ENCODE measurements at regions of chr10 and their contacts with region 1.

Region 1: DNA sequence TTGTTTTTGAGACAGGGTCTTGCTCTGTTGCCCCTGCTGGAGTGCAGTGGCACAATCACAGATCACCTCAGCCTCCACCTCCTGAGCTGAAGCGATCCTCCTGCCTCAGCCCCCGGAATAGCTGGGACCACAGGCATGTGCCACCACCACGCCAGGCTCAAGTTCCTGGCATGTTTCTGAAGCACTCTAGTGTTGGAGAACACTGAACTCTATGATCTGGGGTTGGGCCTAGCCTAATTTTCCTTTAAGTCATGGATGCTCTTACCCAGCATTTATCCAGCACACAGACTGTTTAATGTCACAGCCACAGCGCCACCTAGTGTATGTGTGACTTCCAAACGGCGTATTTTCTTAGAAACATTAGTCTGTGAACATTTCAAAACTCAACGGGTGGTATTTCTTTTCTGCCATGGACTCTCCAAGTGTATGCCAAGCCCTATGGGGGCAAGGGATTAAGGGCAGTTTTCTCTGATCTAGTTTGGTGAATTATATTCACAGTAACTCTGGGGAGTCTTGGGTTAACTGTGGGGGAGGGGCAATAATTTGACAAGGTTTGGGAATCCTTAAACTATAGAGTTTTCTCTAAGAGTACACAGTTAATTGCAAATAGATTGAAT is 91.8 kb downstream of the CREM start:
- DNase-seq: peak; percentile 69 to 90
- ATAC-seq: peak; percentile 58 to 83 (median 70)
- H3K4me3 ChIP-seq: no peak overlapping the region
- H3K27ac ChIP-seq: peak overlapping the region in 9 of 10 donors; percentile 1 to 82 (median 79)
- H3K4me1 ChIP-seq: peaks cover 3 to 38% (median 28%) of the 10 kb centered on the region in 9 donors
- H3K27me3 ChIP-seq: no peaks in the 10 kb centered on the region
- CTCF ChIP-seq: peak; percentile 70 to 87 (median 81)

Region 2: DNA sequence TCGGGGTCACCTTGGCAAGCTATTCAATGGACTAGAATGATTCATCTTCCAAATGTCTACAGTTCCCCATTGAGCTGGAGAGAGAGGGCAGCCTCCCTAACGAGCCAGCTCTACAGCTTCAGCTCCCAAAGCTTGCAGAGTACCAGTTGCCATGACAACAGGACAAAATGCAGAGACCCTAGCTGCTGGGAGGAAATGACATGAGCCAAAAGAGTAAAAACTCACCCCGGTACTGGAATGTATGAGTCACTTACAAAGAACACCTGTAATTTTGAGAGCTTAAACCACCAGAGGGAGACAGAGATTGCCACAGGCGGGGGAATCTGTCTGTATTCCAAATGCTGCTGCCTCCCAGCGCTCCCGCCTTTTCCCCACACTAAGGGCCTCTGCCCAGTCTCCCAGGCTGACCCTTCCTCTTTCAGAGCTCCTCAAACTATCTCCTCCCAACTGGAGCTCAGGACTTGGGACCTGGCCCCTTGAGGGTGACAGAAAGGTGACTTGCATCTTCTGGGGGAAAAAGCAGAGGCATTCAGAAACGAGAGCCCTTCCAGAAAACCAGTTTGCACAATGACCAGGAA is 223.8 kb before region 1 on chr10:
- intact Hi-C with region 1: loop called in 2 of 10 experiments (anchors 5 to 10 kb)
- DNase-seq: peak in 1 of 2 donors; percentile 17
- ATAC-seq: peak; percentile 42 to 82 (median 68)
- H3K4me3 ChIP-seq: no peak overlapping the region
- H3K27ac ChIP-seq: no peak overlapping the region
- H3K4me1 ChIP-seq: peaks cover 0 to 15% (median 4%) of the 10 kb centered on the region in 9 donors
- H3K27me3 ChIP-seq: no peaks in the 10 kb centered on the region
- CTCF ChIP-seq: peak in 8 of 9 donors; percentile 28 to 68 (median 62)

Region 3: GRCh38 chr10:35126530-35127296 is 91.7 kb before region 1 on chr10 and contains the start of gene CREM:
- intact Hi-C with region 1: loop called in 9 of 10 experiments (anchors 1 to 5 kb)
- DNase-seq: peak; percentile 99 to 100
- ATAC-seq: peak; percentile 94 to 99 (median 97)
- H3K4me3 ChIP-seq: peak within 1 kb of the TSS; percentile 57 to 92 (median 82)
- H3K27ac ChIP-seq: peak within 1 kb of the TSS; percentile 97 to 100 (median 100)
- H3K4me1 ChIP-seq: peaks cover 3 to 38% (median 21%) of the 10 kb centered on the region in 9 donors
- H3K27me3 ChIP-seq: no peaks in the 10 kb centered on the region
- CTCF ChIP-seq: peak; percentile 84 to 96 (median 88)
- total RNA-seq, gene CREM: 44.1 to 91.7 (median 57.6) TPM

Region 4: GRCh38 chr10:35195361-35196306 is 22.8 kb before region 1 on chr10:
- intact Hi-C with region 1: loop called in 1 of 10 experiments (anchors 2 kb)
- DNase-seq: peak; percentile 30 to 91
- ATAC-seq: peak; percentile 85 to 93 (median 91)
- H3K4me3 ChIP-seq: peak overlapping the region; percentile 22 to 68 (median 55)
- H3K27ac ChIP-seq: peak overlapping the region; percentile 82 to 97 (median 95)
- H3K4me1 ChIP-seq: peaks cover 0 to 62% (median 11%) of the 10 kb centered on the region in 9 donors
- H3K27me3 ChIP-seq: no peaks in the 10 kb centered on the region
- CTCF ChIP-seq: peak; percentile 74 to 92 (median 83)